Dendritic cell treated with granulocyte-macrophage colony-stimulating factor and Interleukin-4, amounts not matched to agents 40 ng/mL and 50 ng/mL, for 4 days (primary cell): ENCODE measurements at regions of chr12 and their contacts with region 1.

Region 1: GRCh38 chr12:13094347-13094746 is 9.1 kb downstream of the GSG1 start:
- H3K4me3 Mint-ChIP-seq: no peak overlapping the region
- H3K27ac Mint-ChIP-seq: peak overlapping the region; percentile 90
- H3K4me1 Mint-ChIP-seq: peaks cover 82% of the 10 kb centered on the region
- H3K27me3 Mint-ChIP-seq: no peaks in the 10 kb centered on the region

Region 2: DNA sequence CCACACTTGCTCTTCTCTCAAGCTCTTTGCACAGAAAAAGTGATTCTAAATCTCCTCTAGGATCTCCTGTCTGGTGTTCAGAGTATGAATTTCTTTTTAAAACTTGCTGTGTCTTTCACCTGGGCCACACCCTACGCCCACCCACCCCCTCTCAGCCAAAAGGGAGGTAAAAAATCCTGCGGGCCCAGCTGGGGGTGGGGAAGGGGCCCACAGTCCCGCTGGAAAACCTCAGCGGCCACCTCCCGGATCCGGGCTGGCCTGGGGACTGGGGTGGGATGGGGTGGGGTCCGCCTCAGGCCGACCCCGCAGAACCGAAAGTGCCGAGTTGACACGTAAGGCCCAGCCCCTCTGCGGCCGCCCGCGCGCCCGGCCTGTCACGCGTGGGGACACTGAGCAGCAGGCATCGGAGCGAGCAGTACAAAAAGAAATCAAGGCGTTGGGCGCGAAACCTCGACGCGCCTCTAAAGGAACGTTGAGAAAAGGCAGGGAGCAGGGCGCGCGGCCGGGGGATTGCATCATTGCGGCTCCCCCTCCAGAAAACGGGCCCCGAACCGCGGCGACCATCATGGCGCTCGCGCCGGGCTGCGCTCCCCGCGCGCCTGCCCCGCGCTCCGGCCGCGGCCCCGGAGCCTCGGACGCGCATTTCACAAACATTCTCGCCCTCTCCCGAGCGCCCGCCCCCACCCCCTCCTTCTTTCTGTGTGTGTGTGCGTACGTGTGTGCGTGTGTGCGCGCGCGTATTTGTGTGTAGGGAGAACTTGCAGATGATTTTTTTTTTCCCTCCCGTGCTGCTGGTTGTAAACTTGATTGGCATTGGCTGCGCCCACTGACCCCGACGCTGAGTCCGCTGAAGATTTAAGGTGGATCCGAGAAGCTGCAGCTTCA is 369.4 kb before region 1 on chr12:
- intact Hi-C with region 1: loop called (anchors 10 kb)
- H3K4me3 Mint-ChIP-seq: peak overlapping the region; percentile 98
- H3K27ac Mint-ChIP-seq: peak overlapping the region; percentile 98
- H3K4me1 Mint-ChIP-seq: peaks cover 21% of the 10 kb centered on the region
- H3K27me3 Mint-ChIP-seq: no peaks in the 10 kb centered on the region

Region 3: DNA sequence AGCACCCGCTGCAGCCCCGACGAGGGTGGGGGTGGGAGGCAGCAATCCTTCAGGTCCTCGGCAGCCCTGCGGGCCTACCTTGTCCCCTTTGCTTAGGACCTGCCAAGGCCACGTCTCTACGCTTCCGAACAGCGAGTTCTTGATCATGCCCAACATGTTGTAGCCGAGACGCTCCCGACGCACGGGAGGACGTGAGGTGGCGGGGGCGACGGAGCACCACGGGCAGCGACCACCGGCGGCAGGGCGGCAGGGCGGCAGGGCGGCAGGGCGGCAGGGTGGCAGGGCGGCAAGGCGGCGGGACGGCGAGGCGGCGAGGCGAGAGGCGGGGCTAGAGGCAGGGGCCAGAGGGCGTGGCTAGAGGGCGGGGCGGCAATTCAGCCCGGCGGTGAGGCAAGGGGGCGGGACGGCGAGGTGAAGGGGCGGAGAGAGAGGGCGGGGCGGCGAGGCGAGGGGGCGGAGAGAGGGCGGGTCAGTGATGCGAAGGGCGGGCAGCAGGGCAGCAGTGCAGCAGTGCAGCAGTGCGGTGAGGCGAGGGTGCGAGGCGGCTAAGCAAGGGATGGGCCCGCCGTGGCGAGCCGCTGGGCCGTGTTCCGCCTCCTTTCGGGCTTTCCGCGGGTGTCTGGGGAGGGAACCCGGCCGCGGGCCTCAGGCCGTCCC is 94.3 kb before region 1 on chr12 and contains the start of gene HEBP1:
- intact Hi-C with region 1: loop called (anchors 2 kb)
- H3K4me3 Mint-ChIP-seq: peak within 1 kb of the TSS; percentile 95
- H3K27ac Mint-ChIP-seq: peak within 1 kb of the TSS; percentile 99
- H3K4me1 Mint-ChIP-seq: peaks cover 63% of the 10 kb centered on the region
- H3K27me3 Mint-ChIP-seq: no peaks in the 10 kb centered on the region

Region 4: GRCh38 chr12:13044002-13044905 is 50.1 kb before region 1 on chr12 and contains the start of gene FAM234B:
- intact Hi-C with region 1: loop called (anchors 10 kb)
- H3K4me3 Mint-ChIP-seq: peak within 1 kb of the TSS; percentile 88
- H3K27ac Mint-ChIP-seq: peak within 1 kb of the TSS; percentile 82
- H3K4me1 Mint-ChIP-seq: peaks cover 28% of the 10 kb centered on the region
- H3K27me3 Mint-ChIP-seq: peaks cover 16% of the 10 kb centered on the region

Region 5: DNA sequence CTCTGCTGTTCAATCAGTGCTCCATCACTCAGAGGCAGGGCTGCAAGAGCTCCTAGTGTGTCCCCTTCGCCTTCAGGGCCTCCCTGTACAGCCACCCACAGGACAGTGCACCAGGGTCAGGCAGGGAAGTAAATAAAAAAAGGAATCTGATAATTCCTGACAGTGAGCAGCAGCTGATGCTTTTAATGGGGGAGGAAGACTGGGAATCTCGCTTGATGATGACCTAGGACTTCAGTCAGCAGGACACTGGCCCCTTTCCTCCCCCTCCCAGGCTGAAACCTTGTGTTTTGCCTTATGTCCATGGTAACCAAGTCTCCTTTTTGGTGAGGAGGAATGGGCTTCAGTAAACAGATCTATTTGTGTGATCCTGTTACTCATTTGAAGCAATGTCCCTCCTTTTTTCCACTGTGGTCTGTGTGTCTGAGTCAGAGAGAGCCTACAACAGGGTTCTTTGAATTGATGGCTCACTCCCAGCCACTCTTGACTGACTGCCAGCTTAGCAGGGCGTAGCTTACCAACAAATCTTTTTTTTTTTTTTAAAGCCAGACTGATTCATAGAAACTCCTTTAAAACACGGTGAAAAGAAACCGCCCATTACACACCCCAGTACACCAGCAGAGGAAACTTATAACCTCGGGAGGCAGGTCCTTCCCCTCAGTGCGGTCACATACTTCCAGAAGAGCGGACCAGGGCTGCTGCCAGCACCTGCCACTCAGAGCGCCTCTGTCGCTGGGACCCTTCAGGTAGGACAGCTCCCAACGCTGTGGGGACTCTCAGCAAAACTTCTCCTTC is 102.0 kb after region 1 on chr12 and contains the start of gene EMP1:
- intact Hi-C with region 1: loop called (anchors 1 kb)
- H3K4me3 Mint-ChIP-seq: peak within 1 kb of the TSS; percentile 78
- H3K27ac Mint-ChIP-seq: peak within 1 kb of the TSS; percentile 86
- H3K4me1 Mint-ChIP-seq: peaks cover 71% of the 10 kb centered on the region
- H3K27me3 Mint-ChIP-seq: peaks cover 2% of the 10 kb centered on the region

Region 6: DNA sequence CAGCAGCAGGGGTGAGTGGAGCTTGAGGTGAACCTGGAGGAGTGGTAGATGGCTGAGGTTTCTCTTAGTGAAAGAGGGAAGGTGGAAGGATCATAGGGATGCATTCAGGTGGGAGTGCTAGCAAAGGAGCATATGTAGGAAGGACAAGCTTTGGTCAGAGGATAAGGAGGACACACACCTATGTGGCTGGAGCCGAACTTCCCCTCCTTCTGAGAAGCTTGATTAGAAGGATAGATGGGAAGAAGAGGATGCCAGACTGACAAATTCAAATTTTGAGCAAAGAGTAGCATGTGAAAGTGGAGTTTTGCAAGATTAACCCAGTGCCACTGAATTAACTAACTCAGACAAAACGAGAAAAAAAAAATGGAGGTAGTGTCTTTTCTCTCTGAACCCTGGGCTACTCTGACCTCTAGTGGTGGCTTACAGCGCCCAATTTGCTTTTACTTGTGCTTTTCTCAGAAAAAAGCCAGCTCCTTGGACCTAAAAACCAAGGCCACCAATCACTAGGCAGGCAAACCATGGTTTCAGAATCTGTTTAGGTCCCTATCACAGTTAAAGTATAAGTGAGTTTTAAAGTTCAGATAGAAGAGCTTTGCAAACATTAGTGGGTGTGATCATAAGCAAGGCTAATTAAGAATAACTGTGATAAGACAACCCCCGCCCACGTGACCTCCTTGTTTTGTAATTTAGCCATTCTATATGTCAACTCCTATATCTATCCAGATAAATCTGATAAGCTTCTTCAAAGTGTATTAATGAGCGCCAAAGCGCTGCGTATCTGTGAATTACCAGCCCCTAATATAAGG is 117.7 kb after region 1 on chr12:
- intact Hi-C with region 1: loop called (anchors 1 kb)
- H3K4me3 Mint-ChIP-seq: no peak overlapping the region
- H3K27ac Mint-ChIP-seq: peak overlapping the region; percentile 6
- H3K4me1 Mint-ChIP-seq: peaks cover 47% of the 10 kb centered on the region
- H3K27me3 Mint-ChIP-seq: no peaks in the 10 kb centered on the region